ENCODE measurements at regions of chr11 and their contacts with region 1.

Region 1: GRCh38 chr11:65593518-65594298 is 1.9 kb downstream of the KCNK7 start:
- DNase-seq: no peak
- H3K4me3 ChIP-seq: no peak overlapping the region
- CTCF ChIP-seq: peak; percentile 78

Region 2: GRCh38 chr11:65558002-65558931 is 35.4 kb before region 1 on chr11 and contains the start of gene LTBP3:
- CTCF ChIA-PET with region 1: interaction called, 15 read pairs
- POLR2A ChIA-PET with region 1: no interaction called
- DNase-seq: no peak
- H3K4me3 ChIP-seq: peak within 1 kb of the TSS; percentile 69
- CTCF ChIP-seq: no peak

Region 3: DNA sequence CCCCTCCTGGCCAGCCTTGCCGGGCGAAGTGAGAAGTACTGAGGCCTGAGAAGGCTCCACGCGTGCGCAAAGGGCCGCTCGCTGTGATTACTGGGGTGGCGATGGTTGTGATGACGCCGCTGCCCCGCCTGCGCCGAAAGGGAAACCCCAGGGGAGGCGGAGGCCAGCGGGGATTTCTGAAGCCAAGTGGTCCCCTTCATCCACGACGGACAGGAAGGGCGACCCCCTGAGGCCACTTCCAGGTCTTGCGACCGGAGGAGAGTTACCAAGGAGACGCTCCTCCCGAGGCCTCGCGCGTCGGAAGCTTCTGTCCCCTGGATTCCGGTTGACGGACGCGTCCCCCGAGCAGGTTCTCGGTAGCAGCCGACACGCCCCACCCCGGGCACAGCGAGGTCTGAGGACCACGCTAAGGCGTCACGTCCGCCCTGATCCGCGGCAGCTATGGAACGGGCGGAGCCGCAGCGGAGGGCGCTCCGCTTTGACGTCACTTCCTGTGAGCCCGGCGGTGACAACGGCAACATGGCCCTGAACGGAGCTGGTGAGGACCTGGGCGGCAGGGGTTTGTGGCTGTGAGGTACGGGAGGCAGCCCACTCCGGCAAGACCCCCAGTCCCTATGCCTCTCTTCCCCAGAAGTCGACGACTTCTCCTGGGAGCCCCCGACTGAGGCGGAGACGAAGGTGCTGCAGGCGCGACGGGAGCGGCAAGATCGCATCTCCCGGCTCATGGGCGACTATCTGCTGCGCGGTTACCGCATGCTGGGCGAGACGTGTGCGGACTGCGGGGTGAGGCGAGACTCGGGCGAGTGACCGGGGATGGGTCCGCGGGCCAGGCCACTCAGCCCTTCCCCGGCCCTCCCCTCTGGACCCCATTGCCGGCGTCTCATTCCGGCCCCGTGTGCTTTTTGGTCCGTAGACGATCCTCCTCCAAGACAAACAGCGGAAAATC is 23.5 kb before region 1 on chr11 and contains the start of gene ZNRD2:
- CTCF ChIA-PET with region 1: interaction called, 60 read pairs
- POLR2A ChIA-PET with region 1: no interaction called
- DNase-seq: peak; percentile 88
- H3K4me3 ChIP-seq: peak within 1 kb of the TSS; percentile 89
- CTCF ChIP-seq: peak; percentile 62

Region 4: DNA sequence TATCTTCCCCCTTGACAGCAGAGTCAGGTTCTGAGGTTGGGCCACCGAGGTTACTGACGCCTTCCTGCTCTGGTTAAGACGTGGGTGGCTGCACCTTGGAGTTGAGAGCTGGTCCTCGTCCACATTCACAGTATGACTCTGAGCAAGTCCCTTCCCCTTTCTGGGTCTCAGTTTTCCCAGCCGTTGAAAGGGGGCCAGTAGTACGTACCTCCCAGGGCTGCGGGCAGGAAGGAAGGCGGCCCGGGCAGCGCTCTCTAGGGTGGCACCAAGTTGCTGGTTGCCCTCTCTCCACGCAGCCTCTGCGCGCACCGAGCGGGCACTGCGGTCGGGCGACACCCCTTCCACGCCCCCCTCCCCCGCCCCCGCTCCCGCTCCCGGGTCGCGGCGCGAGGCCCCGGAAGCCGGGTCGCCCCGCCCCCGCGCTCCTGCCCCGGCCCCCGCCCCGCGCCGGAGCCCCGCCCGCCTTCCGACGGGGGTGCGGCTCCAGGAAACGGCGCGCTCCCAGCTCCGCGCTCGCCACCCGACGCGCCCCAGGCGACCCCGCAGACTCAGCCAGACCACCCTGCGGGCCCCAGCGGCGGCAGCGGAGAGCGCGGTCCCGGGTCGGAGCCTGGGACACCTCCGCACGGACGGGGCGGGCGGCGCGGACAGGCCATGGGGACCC is 18.0 kb before region 1 on chr11 and contains the start of gene EHBP1L1:
- CTCF ChIA-PET with region 1: interaction called, 60 read pairs
- POLR2A ChIA-PET with region 1: interaction called, 18 read pairs
- DNase-seq: no peak
- H3K4me3 ChIP-seq: peak within 1 kb of the TSS; percentile 68
- CTCF ChIP-seq: no peak

Region 5: GRCh38 chr11:65615229-65615941 is 21.7 kb after region 1 on chr11 and contains the start of gene PCNX3:
- CTCF ChIA-PET with region 1: interaction called, 134 read pairs
- POLR2A ChIA-PET with region 1: interaction called, 3 read pairs
- DNase-seq: peak; percentile 99
- H3K4me3 ChIP-seq: peak within 1 kb of the TSS; percentile 93
- CTCF ChIP-seq: no peak

Region 6: GRCh38 chr11:65900125-65900898 is 306.6 kb after region 1 on chr11 and contains the start of gene FOSL1:
- CTCF ChIA-PET with region 1: no interaction called
- POLR2A ChIA-PET with region 1: no interaction called
- DNase-seq: peak; percentile 73
- H3K4me3 ChIP-seq: peak within 1 kb of the TSS; percentile 98
- CTCF ChIP-seq: no peak

Measured in AG04449 (cell line).